CD4-positive, alpha-beta T cell (primary cell): ENCODE measurements at regions of chr2 and their contacts with region 1.

Region 1: DNA sequence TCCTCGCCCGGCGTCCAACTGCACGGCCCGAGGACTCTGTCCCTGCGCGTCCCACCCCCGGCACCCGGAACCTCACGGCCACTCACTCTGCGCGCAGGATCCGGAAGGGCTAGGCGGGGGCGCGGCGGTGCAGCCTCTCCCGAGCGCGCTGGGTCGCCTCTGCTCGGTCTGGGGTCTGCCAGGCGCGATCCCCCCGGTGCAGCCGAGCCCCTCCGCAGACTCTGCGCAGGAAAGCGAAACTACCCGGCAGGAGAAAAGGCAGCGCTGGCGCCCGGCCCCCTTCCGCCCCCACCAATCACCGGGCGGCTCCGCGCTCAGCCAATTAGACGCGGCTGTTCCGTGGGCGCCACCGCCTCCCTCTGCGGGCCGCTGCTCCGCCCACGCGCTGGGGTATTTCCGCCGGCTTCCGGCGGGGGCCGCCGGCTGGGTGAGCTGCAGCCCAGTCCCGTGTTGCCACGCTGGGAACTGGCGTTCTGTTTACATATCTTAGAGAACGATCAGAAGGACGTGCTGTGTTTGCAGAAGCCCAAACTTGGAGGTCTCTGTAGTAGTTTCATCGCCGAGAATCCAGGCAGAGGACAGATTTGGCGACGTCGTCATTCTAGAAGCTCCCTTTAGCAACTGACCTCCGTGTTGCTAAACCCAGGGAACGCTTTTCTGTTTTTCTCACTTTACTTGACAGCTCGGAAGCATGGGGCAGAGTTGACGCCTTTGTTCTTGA is at the start of gene STAT1:
- DNase-seq: peak; percentile 89 to 99 (median 96)
- ATAC-seq: peak; percentile 84
- H3K4me3 ChIP-seq: peak within 1 kb of the TSS; percentile 75
- H3K4me3 Mint-ChIP-seq: no peak within 1 kb of the TSS
- H3K27ac ChIP-seq: peak within 1 kb of the TSS; percentile 89 to 91
- H3K27ac Mint-ChIP-seq: no peak within 1 kb of the TSS
- H3K4me1 ChIP-seq: peaks cover 54% of the 10 kb centered on the region
- H3K4me1 Mint-ChIP-seq: peaks cover 43% of the 10 kb centered on the region
- H3K27me3 ChIP-seq: no peaks in the 10 kb centered on the region
- H3K27me3 Mint-ChIP-seq: no peaks in the 10 kb centered on the region
- CTCF ChIP-seq: no peak
- total RNA-seq, gene STAT1: 56.6 to 57.8 TPM

Region 2: DNA sequence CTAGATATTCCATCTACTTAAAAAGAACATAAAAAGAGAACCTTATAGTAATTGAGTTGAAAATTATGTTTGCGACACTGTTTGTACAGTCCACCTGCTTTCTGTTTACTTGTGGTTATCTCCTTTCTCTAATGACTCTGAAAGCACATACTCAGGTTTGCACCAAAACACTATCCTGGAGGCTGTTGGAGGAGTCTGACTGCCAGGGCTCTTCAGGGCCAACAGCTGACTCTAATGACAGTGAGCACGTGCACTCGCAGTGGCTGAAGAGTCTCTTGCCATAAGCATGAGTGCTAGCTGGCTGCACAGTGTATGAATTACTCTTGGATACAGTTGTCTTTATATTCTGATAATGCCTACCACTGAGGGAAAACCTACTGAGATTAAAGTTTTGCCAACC is 150.1 kb before region 1 on chr2:
- CTCF ChIA-PET with region 1: no interaction called
- POLR2A ChIA-PET with region 1: no interaction called
- intact Hi-C with region 1: no loop called
- DNase-seq: no peak
- ATAC-seq: no peak
- H3K4me3 ChIP-seq: no peak overlapping the region
- H3K4me3 Mint-ChIP-seq: no peak overlapping the region
- H3K27ac ChIP-seq: no peak overlapping the region
- H3K27ac Mint-ChIP-seq: no peak overlapping the region
- H3K4me1 ChIP-seq: peaks cover 7% of the 10 kb centered on the region
- H3K4me1 Mint-ChIP-seq: peaks cover 29% of the 10 kb centered on the region
- H3K27me3 ChIP-seq: no peaks in the 10 kb centered on the region
- H3K27me3 Mint-ChIP-seq: no peaks in the 10 kb centered on the region
- CTCF ChIP-seq: no peak

Region 3: DNA sequence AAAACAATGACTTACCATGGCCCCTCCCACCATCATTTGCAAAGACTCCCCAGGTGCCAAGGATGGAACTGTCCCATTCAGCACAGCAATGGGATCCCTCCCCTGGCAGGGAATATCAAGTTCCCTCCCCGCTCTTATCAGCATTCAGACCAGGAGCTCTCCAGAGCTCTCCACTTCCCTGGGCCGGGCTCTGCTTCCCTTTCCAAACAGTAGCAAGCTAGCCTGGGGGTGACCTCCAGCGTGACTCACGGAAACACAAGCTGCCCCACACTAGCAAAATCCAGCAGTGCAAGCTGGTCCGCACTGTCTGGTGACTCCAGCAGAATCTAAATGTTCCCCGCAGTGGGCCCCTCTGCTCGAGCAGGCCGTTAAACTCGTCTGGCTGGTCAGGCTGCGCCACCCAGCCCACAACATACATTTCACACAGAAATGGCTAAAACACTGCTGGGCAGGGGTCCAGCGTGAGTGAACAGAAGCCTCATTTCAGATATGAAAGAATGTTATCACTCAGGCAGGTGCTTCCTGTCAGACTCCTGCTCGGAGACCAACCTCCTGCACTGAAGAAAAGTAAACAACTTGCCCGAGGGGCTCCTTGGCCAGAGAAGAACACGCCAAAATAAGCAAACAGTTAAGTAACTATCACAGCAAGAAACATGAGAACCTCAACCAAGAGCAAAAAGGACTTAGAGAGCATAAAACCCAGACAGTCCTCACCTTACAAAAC is 34.0 kb before region 1 on chr2:
- CTCF ChIA-PET with region 1: no interaction called
- POLR2A ChIA-PET with region 1: interaction called, 11 read pairs
- intact Hi-C with region 1: loop called in 1 of 2 experiments (anchors 5 kb)
- DNase-seq: no peak
- ATAC-seq: no peak
- H3K4me3 ChIP-seq: no peak overlapping the region
- H3K4me3 Mint-ChIP-seq: peak overlapping the region; percentile 18
- H3K27ac ChIP-seq: peak overlapping the region; percentile 17 to 43
- H3K27ac Mint-ChIP-seq: peak overlapping the region; percentile 87
- H3K4me1 ChIP-seq: peaks cover 11% of the 10 kb centered on the region
- H3K4me1 Mint-ChIP-seq: peaks cover 49% of the 10 kb centered on the region
- H3K27me3 ChIP-seq: no peaks in the 10 kb centered on the region
- H3K27me3 Mint-ChIP-seq: no peaks in the 10 kb centered on the region
- CTCF ChIP-seq: no peak

Region 4: GRCh38 chr2:190986221-190986953 is 27.7 kb before region 1 on chr2:
- CTCF ChIA-PET with region 1: no interaction called
- POLR2A ChIA-PET with region 1: interaction called, 14 read pairs
- intact Hi-C with region 1: no loop called
- DNase-seq: peak in 1 of 14 experiments; percentile 25
- ATAC-seq: no peak
- H3K4me3 ChIP-seq: no peak overlapping the region
- H3K4me3 Mint-ChIP-seq: no peak overlapping the region
- H3K27ac ChIP-seq: peak overlapping the region in 1 of 2 donors; percentile 54
- H3K27ac Mint-ChIP-seq: peak overlapping the region; percentile 58
- H3K4me1 ChIP-seq: peaks cover 17% of the 10 kb centered on the region
- H3K4me1 Mint-ChIP-seq: peaks cover 48% of the 10 kb centered on the region
- H3K27me3 ChIP-seq: no peaks in the 10 kb centered on the region
- H3K27me3 Mint-ChIP-seq: no peaks in the 10 kb centered on the region
- CTCF ChIP-seq: no peak

Region 5: GRCh38 chr2:190996338-190996946 is 17.6 kb before region 1 on chr2:
- CTCF ChIA-PET with region 1: interaction called, 7 read pairs
- POLR2A ChIA-PET with region 1: interaction called, 29 read pairs
- intact Hi-C with region 1: no loop called
- DNase-seq: peak in 8 of 14 experiments; percentile 19 to 76 (median 44)
- ATAC-seq: peak; percentile 92
- H3K4me3 ChIP-seq: no peak overlapping the region
- H3K4me3 Mint-ChIP-seq: no peak overlapping the region
- H3K27ac ChIP-seq: peak overlapping the region in 1 of 2 donors; percentile 22
- H3K27ac Mint-ChIP-seq: peak overlapping the region; percentile 50
- H3K4me1 ChIP-seq: peaks cover 18% of the 10 kb centered on the region
- H3K4me1 Mint-ChIP-seq: peaks cover 46% of the 10 kb centered on the region
- H3K27me3 ChIP-seq: no peaks in the 10 kb centered on the region
- H3K27me3 Mint-ChIP-seq: no peaks in the 10 kb centered on the region
- CTCF ChIP-seq: peak; percentile 67